ENCODE measurements at regions of chr4 and their contacts with region 1.

Region 1: GRCh38 chr4:174120446-174121295 is 162.8 kb downstream of the FBXO8 start:
- DNase-seq: peak; percentile 60 to 65
- H3K4me3 ChIP-seq: peak overlapping the region; percentile 44
- H3K4me3 Mint-ChIP-seq: peak overlapping the region; percentile 83
- H3K27ac Mint-ChIP-seq: no peak overlapping the region
- H3K4me1 ChIP-seq: 0 out of 2 replicates have a peak, but pooled peaks cover 5% of the 10 kb centered on the region
- H3K4me1 Mint-ChIP-seq: no peaks in the 10 kb centered on the region
- H3K27me3 ChIP-seq: no peaks in the 10 kb centered on the region
- H3K27me3 Mint-ChIP-seq: peaks cover 3% of the 10 kb centered on the region
- CTCF ChIP-seq: peak; percentile 37 to 56

Region 2: DNA sequence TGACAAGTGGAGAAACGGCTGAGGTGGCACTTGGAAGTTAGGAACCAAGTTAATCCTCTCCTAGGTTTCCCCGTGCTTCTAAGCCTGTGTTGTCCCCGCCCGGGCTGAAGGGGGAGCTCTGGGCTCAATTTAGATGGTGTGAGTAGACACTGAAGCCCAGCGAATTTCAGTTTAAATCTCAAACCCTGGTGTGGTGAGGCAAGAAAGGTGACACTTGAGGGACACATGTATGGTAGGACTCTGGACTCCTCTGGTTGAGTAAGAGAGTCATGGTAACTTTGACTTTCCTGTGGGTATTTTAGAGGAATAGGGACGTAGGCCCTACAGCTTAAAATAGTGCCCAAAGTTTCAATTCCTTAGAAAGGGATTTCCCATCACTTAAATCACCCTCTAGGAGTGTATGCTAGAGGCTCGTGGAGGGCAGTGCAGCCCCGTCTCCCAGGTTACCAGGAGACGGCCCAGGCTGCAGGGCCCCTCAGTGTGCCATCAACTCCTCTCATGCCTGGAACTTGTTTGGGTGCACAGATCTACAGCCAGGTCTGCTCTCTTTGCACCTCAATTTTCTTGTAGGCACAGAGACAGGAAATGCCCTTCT is 614.6 kb before region 1 on chr4:
- CTCF ChIA-PET with region 1: no interaction called
- POLR2A ChIA-PET with region 1: no interaction called
- intact Hi-C with region 1: loop called (anchors 2 kb)
- DNase-seq: peak in 1 of 2 experiments; percentile 65
- H3K4me3 ChIP-seq: no peak overlapping the region
- H3K4me3 Mint-ChIP-seq: no peak overlapping the region
- H3K27ac Mint-ChIP-seq: no peak overlapping the region
- H3K4me1 ChIP-seq: 0 out of 2 replicates have a peak, but pooled peaks cover 3% of the 10 kb centered on the region
- H3K4me1 Mint-ChIP-seq: no peaks in the 10 kb centered on the region
- H3K27me3 ChIP-seq: no peaks in the 10 kb centered on the region
- H3K27me3 Mint-ChIP-seq: no peaks in the 10 kb centered on the region
- CTCF ChIP-seq: peak; percentile 53 to 69

Region 3: DNA sequence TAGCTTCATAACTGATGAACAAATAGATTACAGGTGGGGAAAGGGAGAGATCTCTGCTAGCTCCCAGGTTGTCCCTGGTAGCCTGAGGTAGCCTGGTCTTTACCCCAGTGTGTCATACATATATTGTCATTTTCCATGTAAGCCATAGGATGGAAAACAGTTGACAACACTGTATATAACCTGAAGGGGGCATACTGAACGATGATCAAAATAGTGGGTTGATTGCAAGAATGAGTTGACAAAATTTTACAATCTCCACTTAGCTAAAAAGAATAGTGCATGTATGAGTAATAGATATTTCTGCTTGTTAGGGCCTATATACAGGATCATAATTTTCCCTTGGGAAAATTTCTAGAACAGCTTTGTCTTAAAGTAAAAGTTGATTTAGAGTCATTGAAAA is 286.5 kb before region 1 on chr4:
- CTCF ChIA-PET with region 1: no interaction called
- POLR2A ChIA-PET with region 1: no interaction called
- intact Hi-C with region 1: loop called (anchors 5 kb)
- DNase-seq: no peak
- H3K4me3 ChIP-seq: no peak overlapping the region
- H3K4me3 Mint-ChIP-seq: no peak overlapping the region
- H3K27ac Mint-ChIP-seq: no peak overlapping the region
- H3K4me1 ChIP-seq: no peaks in the 10 kb centered on the region
- H3K4me1 Mint-ChIP-seq: no peaks in the 10 kb centered on the region
- H3K27me3 ChIP-seq: no peaks in the 10 kb centered on the region
- H3K27me3 Mint-ChIP-seq: no peaks in the 10 kb centered on the region
- CTCF ChIP-seq: no peak

Region 4: GRCh38 chr4:173990126-173990868 is 130.4 kb before region 1 on chr4:
- CTCF ChIA-PET with region 1: no interaction called
- POLR2A ChIA-PET with region 1: no interaction called
- intact Hi-C with region 1: loop called (anchors 5 kb)
- DNase-seq: peak in 1 of 2 experiments; percentile 16
- H3K4me3 ChIP-seq: no peak overlapping the region
- H3K4me3 Mint-ChIP-seq: no peak overlapping the region
- H3K27ac Mint-ChIP-seq: no peak overlapping the region
- H3K4me1 ChIP-seq: no peaks in the 10 kb centered on the region
- H3K4me1 Mint-ChIP-seq: peaks cover 5% of the 10 kb centered on the region
- H3K27me3 ChIP-seq: no peaks in the 10 kb centered on the region
- H3K27me3 Mint-ChIP-seq: no peaks in the 10 kb centered on the region
- CTCF ChIP-seq: peak; percentile 43 to 58

Region 5: DNA sequence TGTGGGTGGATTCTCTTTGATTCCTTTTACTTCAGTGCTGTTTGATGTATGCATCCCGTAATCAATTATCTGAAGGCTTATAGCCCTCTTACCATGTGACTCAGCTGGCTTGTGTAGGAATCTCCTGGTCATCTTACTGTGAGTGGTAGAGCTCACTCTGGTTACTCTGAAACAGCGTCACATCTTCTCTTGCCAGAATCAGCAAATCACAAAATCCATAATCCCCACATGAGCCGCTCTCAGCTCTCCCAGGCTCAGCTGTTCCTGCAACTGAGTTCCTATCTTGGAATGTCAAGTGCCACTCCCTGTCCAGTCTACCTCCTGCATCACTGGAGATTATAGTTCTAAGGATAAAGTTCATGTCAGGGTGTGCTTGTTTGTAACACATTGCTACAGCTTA is 115.2 kb before region 1 on chr4:
- CTCF ChIA-PET with region 1: no interaction called
- POLR2A ChIA-PET with region 1: no interaction called
- intact Hi-C with region 1: loop called (anchors 2 kb)
- DNase-seq: peak; percentile 44 to 56
- H3K4me3 ChIP-seq: no peak overlapping the region
- H3K4me3 Mint-ChIP-seq: peak overlapping the region; percentile 43
- H3K27ac Mint-ChIP-seq: peak overlapping the region; percentile 71
- H3K4me1 ChIP-seq: peaks cover 14% of the 10 kb centered on the region
- H3K4me1 Mint-ChIP-seq: peaks cover 20% of the 10 kb centered on the region
- H3K27me3 ChIP-seq: no peaks in the 10 kb centered on the region
- H3K27me3 Mint-ChIP-seq: no peaks in the 10 kb centered on the region
- CTCF ChIP-seq: no peak

Region 6: GRCh38 chr4:174036111-174036510 is 84.6 kb before region 1 on chr4:
- CTCF ChIA-PET with region 1: no interaction called
- POLR2A ChIA-PET with region 1: no interaction called
- intact Hi-C with region 1: loop called (anchors 1 kb)
- DNase-seq: no peak
- H3K4me3 ChIP-seq: no peak overlapping the region
- H3K4me3 Mint-ChIP-seq: no peak overlapping the region
- H3K27ac Mint-ChIP-seq: no peak overlapping the region
- H3K4me1 ChIP-seq: peaks cover 20% of the 10 kb centered on the region
- H3K4me1 Mint-ChIP-seq: peaks cover 11% of the 10 kb centered on the region
- H3K27me3 ChIP-seq: no peaks in the 10 kb centered on the region
- H3K27me3 Mint-ChIP-seq: no peaks in the 10 kb centered on the region
- CTCF ChIP-seq: no peak

Region 7: DNA sequence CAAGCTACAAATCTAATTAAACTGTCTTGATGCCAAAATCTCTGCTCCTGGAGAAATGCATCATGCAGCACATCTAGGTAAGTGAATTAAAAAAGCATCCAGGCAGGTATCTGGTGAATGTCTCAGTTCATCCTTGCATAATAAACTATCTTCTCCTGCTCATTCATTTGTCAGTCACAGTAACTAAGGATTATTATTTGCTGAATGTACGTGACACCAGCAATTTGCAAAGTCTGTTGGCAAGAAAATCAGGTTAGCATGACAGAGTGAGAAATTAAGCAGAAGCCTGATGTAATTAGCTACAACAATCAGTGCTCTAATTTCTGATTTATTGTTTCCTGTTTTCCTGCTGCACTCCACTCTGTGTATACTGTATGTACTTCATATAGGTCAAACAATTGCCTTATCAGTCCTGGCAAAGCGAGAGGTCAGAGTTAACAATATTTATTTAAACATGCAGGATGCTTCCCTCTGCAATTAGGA is 50.8 kb before region 1 on chr4:
- CTCF ChIA-PET with region 1: no interaction called
- POLR2A ChIA-PET with region 1: no interaction called
- intact Hi-C with region 1: no loop called
- DNase-seq: no peak
- H3K4me3 ChIP-seq: no peak overlapping the region
- H3K4me3 Mint-ChIP-seq: no peak overlapping the region
- H3K27ac Mint-ChIP-seq: no peak overlapping the region
- H3K4me1 ChIP-seq: peaks cover 9% of the 10 kb centered on the region
- H3K4me1 Mint-ChIP-seq: peaks cover 25% of the 10 kb centered on the region
- H3K27me3 ChIP-seq: no peaks in the 10 kb centered on the region
- H3K27me3 Mint-ChIP-seq: no peaks in the 10 kb centered on the region
- CTCF ChIP-seq: no peak